ENCODE measurements at regions of chr7 and their contacts with region 1.

Region 1: GRCh38 chr7:85023045-85023712 is 163.7 kb downstream of the SEMA3D start:
- DNase-seq: no peak
- H3K4me3 Mint-ChIP-seq: no peak overlapping the region
- H3K27ac Mint-ChIP-seq: no peak overlapping the region
- H3K4me1 Mint-ChIP-seq: no peaks in the 10 kb centered on the region
- H3K27me3 Mint-ChIP-seq: peaks cover 2% of the 10 kb centered on the region

Region 2: GRCh38 chr7:83936056-83936708 is 1087.0 kb before region 1 on chr7:
- intact Hi-C with region 1: loop called (anchors 1 kb)
- DNase-seq: peak; percentile 2
- H3K4me3 Mint-ChIP-seq: no peak overlapping the region
- H3K27ac Mint-ChIP-seq: no peak overlapping the region
- H3K4me1 Mint-ChIP-seq: no peaks in the 10 kb centered on the region
- H3K27me3 Mint-ChIP-seq: peaks cover 5% of the 10 kb centered on the region

Region 3: DNA sequence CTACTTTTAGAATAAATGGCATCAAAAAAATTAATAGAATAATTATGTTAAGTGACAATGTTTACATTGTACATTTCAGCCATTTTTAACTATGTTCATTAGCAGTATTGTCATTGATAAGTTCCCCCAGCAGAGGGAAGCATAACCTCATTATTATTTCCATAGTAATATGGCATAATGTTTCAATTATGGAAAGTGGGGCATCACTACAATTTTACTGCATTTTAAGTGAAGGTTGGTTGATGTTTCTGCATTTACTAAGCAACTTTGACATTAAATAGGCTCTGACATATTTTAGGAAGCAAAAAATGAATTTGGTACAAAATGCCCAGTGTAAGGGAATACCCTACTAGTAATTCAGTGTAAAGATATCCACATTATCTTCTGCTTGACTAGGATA is 1046.9 kb before region 1 on chr7:
- intact Hi-C with region 1: loop called (anchors 1 kb)
- DNase-seq: no peak
- H3K4me3 Mint-ChIP-seq: no peak overlapping the region
- H3K27ac Mint-ChIP-seq: no peak overlapping the region
- H3K4me1 Mint-ChIP-seq: no peaks in the 10 kb centered on the region
- H3K27me3 Mint-ChIP-seq: peaks cover 2% of the 10 kb centered on the region

Region 4: GRCh38 chr7:84455788-84456187 is 567.4 kb before region 1 on chr7:
- intact Hi-C with region 1: loop called (anchors 10 kb)
- DNase-seq: no peak
- H3K4me3 Mint-ChIP-seq: no peak overlapping the region
- H3K27ac Mint-ChIP-seq: no peak overlapping the region
- H3K4me1 Mint-ChIP-seq: no peaks in the 10 kb centered on the region
- H3K27me3 Mint-ChIP-seq: no peaks in the 10 kb centered on the region

Region 5: DNA sequence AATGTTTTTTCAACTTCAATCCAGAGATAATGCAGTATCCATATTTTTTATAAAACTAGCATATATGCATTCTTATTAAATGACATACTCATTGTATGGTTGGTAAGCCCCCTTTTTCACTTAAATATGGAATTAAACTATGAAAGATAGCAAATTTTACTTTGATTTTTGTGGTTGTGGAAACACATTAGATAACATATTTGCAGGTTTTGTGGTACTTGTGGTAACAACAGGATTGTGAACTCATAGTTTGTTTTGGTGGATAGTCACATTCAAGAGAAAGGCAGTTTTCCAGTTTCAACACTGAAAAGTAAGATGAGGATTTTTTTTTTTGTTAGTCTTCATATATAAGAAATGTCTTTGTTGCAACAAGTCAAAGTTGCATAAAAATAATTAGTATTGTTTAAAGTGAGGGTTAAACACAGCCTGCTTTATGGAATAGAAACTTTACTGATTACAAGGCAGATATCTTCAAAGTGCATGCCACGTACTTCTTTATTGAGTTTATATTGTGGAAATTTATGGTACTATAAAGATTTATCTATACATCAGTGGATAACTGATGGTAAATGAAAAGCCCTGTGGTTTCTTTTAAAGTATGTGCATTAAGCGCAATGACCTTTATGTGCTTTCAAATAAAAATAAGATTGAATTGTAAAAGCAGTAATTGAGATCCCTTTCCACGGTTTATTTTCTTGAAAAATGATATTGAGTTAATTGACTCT is 203.3 kb after region 1 on chr7:
- intact Hi-C with region 1: no loop called
- DNase-seq: no peak
- H3K4me3 Mint-ChIP-seq: no peak overlapping the region
- H3K27ac Mint-ChIP-seq: no peak overlapping the region
- H3K4me1 Mint-ChIP-seq: no peaks in the 10 kb centered on the region
- H3K27me3 Mint-ChIP-seq: no peaks in the 10 kb centered on the region

Measured in activated T-helper 1 cell treated with anti-CD3 and anti-CD28 coated beads, Interleukin-12 subunit alpha, Interleukin-12 subunit beta, Interleukin-2, Interleukin-4 antibody, amounts not matched to agents 30 ng/mL and 10 ng/mL and 1 ng/mL, durations not matched to agents 14 hours and 24 hours and 36 hours (primary cell).